BJ (cell line): ENCODE measurements at regions of chr22 and their contacts with region 1.

Region 1: GRCh38 chr22:39532215-39533071 is at the start of gene RPS19BP1:
- DNase-seq: peak; percentile 99
- H3K4me3 ChIP-seq: peak within 1 kb of the TSS; percentile 78
- H3K27me3 ChIP-seq: no peaks in the 10 kb centered on the region; the same call in 1 of the 2 replicates
- CTCF ChIP-seq: no peak
- polyA plus RNA-seq, gene RPS19BP1: 64.0 and 66.7 TPM in 2 replicates

Region 2: DNA sequence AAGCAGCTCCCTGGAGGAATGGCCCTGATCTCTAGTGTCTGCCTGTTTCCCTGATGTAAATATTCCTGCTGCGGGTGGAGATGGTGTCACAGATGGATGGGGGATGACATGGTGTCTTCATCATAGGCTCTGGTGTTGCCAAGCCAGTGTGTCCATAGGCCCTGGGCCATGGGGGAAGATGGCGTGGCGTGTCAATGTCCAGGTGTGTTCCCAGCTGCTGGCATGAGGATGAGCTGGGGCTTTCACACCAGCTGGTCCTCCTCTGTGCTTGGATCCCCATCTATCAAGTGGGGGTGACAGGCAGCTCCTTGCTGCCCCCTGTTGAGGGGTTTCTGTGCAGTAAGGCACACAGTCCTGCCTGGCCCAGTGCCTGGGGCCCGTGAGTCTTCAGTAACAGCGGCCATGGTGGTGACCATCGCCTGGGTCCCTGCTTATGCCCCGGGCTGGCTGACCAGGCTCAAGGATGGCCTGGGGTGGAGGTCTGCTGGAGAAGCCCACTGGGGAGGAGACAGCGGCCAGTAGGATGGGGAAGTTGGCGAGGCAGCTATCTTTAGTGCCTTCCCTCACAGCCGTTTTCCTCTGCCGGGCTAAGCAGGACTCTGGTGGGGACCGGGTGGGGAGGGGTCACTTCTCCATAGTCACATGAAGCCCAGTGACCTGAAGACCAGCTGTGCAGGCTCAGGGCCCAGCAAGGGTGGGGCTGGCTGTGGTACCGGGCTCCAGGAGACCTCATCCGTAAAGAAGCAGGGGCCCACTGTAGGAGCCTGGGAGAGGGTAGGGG is 225.7 kb before region 1 on chr22:
- CTCF ChIA-PET with region 1: interaction called, 15 read pairs
- POLR2A ChIA-PET with region 1: no interaction called
- DNase-seq: no peak
- H3K4me3 ChIP-seq: no peak overlapping the region
- H3K27me3 ChIP-seq: no peaks in the 10 kb centered on the region
- CTCF ChIP-seq: peak; percentile 27; the same call in 1 of the 2 replicates

Region 3: GRCh38 chr22:39343259-39344048 is 189.0 kb before region 1 on chr22:
- CTCF ChIA-PET with region 1: interaction called, 22 read pairs
- POLR2A ChIA-PET with region 1: no interaction called
- DNase-seq: no peak
- H3K4me3 ChIP-seq: no peak overlapping the region
- H3K27me3 ChIP-seq: no peaks in the 10 kb centered on the region
- CTCF ChIP-seq: peak; percentile 93

Region 4: GRCh38 chr22:39426380-39427043 is 105.9 kb before region 1 on chr22:
- CTCF ChIA-PET with region 1: no interaction called
- POLR2A ChIA-PET with region 1: no interaction called
- DNase-seq: no peak
- H3K4me3 ChIP-seq: no peak overlapping the region
- H3K27me3 ChIP-seq: no peaks in the 10 kb centered on the region
- CTCF ChIP-seq: no peak

Region 5: GRCh38 chr22:39490135-39490798 is 42.2 kb before region 1 on chr22:
- CTCF ChIA-PET with region 1: interaction called, 35 read pairs
- POLR2A ChIA-PET with region 1: no interaction called
- DNase-seq: no peak
- H3K4me3 ChIP-seq: no peak overlapping the region
- H3K27me3 ChIP-seq: no peaks in the 10 kb centered on the region
- CTCF ChIP-seq: no peak

Region 6: DNA sequence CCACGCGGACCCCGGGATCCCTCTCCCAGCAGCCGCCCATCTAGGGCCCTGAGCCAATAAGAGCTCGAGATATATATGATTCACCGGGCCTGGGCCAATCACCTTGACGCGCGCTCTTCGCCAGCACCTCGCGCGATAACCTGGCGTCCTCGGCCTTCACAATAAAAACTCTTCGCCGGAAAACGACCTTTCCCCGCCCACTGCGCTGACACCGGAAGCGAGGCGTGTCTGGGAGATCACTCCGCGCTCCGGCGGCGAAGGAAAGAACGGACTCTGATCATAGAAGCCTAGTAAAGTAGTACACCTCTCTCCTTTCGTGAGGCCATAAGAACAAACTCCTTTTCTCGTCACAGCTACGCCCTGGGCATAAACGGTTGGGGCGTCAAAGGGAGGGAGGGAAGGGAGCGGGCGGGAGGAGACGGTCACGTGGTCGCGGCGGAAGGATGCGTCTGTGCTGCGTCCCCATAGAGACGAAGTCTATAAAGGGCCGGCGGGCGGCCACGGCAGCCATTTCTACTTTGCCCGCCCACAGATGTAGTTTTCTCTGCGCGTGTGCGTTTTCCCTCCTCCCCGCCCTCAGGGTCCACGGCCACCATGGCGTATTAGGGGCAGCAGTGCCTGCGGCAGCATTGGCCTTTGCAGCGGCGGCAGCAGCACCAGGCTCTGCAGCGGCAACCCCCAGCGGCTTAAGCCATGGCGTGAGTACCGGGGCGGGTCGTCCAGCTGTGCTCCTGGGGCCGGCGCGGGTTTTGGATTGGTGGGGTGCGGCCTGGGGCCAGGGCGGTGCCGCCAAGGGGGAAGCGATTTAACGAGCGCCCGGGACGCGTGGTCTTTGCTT is 12.2 kb before region 1 on chr22 and contains the start of gene ATF4:
- CTCF ChIA-PET with region 1: interaction called, 28 read pairs
- POLR2A ChIA-PET with region 1: interaction called, 3 read pairs
- DNase-seq: peak; percentile 91
- H3K4me3 ChIP-seq: peak within 1 kb of the TSS; percentile 88
- H3K27me3 ChIP-seq: no peaks in the 10 kb centered on the region
- CTCF ChIP-seq: no peak
- polyA plus RNA-seq, gene ATF4: 886 and 999 TPM in 2 replicates

Region 7: GRCh38 chr22:39661842-39662676 is 129.6 kb after region 1 on chr22:
- CTCF ChIA-PET with region 1: no interaction called
- POLR2A ChIA-PET with region 1: no interaction called
- DNase-seq: no peak
- H3K4me3 ChIP-seq: no peak overlapping the region
- H3K27me3 ChIP-seq: peaks cover 32% of the 10 kb centered on the region
- CTCF ChIP-seq: no peak

Region 8: GRCh38 chr22:39808081-39808480 is 275.6 kb after region 1 on chr22:
- CTCF ChIA-PET with region 1: interaction called, 12 read pairs
- POLR2A ChIA-PET with region 1: no interaction called
- DNase-seq: no peak
- H3K4me3 ChIP-seq: no peak overlapping the region
- H3K27me3 ChIP-seq: peaks cover 13% of the 10 kb centered on the region
- CTCF ChIP-seq: peak; percentile 56